Calu3 (cell line): ENCODE measurements at regions of chr9 and their contacts with region 1.

Region 1: DNA sequence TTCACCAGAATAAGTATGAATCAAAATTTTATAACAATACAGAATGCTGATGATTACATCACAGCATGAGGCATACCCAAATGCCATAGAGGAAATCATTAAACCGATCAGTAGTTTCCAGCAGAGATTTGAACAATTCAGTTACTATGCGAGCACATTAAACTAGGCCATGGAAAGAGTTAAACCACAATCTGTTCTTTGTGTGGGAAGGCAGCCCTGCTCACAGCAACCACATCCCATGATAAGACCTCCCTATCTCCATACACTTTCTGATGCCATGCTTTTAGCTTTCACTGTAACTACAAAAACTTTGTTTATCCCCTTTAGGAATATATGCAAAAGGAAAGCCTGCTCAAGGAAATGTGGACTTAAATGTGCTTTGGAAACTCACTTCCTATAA is 4.5 kb downstream of the NFIB start:
- DNase-seq: peak; percentile 41
- H3K4me3 Mint-ChIP-seq: peak overlapping the region; percentile 54
- H3K27ac Mint-ChIP-seq: peak overlapping the region; percentile 54
- H3K4me1 Mint-ChIP-seq: peaks cover 29% of the 10 kb centered on the region
- H3K27me3 Mint-ChIP-seq: no peaks in the 10 kb centered on the region
- CTCF ChIP-seq: no peak

Region 2: GRCh38 chr9:14089051-14089803 is 220.2 kb before region 1 on chr9:
- CTCF ChIA-PET with region 1: no interaction called
- intact Hi-C with region 1: no loop called
- DNase-seq: no peak
- H3K4me3 Mint-ChIP-seq: no peak overlapping the region
- H3K27ac Mint-ChIP-seq: no peak overlapping the region
- H3K4me1 Mint-ChIP-seq: no peaks in the 10 kb centered on the region
- H3K27me3 Mint-ChIP-seq: no peaks in the 10 kb centered on the region
- CTCF ChIP-seq: no peak

Region 3: DNA sequence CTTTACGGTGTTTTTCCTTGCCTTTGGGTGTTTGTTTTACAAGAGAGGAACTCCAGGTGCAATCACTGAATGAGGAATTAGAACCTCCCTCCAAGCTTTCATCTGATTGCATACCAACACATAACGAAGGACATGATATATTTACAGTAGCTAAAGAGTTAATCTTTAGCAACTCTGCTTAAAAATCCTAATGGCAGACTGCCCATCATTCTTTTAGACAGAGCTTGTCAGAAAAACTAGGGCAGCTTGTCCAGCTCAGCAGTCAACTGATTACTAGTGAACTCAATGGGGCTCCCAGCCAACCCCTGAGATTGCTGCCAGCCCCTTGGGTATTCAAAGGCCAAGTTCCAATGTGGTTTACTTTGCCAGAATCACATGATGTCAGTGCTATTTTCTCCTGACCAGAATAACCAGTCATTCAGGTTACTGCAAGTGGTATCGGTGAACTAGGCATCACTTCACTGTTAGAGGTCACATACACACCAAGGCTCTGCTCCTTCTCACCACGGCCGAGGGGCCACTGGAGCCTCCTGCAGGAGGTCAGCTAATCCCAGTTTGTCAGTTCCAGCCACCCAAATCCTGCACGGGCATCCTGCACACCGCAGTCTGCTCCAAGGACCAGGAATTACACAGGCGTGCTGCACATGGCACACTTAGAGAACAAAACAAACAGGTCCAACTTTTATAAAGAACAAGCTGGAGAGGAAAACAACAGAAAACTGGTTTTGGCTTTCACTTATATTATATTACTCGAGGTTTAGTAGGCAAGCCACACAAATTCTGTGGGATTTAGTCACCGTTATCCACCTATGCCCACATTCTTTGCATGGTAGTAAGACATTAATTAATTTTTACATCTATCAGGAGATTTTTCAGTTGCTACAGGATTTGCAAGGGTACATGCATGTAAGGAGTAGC is 58.0 kb before region 1 on chr9:
- CTCF ChIA-PET with region 1: no interaction called
- intact Hi-C with region 1: loop called (anchors 10 kb)
- DNase-seq: peak; percentile 76
- H3K4me3 Mint-ChIP-seq: peak overlapping the region; percentile 45
- H3K27ac Mint-ChIP-seq: peak overlapping the region; percentile 69
- H3K4me1 Mint-ChIP-seq: peaks cover 21% of the 10 kb centered on the region
- H3K27me3 Mint-ChIP-seq: no peaks in the 10 kb centered on the region
- CTCF ChIP-seq: no peak

Region 4: DNA sequence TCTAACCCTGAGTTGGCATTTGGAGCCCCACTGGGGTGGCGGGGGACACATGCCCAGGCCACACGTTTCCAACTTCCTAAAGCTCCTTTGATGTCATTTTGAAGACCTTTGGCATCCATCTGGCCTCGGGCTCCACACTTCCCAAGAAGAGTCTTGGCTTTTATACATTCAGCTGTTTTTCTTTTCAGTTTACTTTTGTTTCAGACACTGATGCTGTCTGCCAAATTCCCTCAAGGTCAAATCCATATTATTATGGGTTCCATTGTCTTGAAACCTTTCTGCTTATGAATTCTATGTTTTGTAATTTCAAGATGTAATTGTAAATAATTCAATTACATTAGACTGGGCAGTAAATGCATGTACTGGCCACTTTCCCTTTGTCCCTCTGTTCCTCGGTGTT is 28.2 kb after region 1 on chr9:
- CTCF ChIA-PET with region 1: no interaction called
- intact Hi-C with region 1: no loop called
- DNase-seq: no peak
- H3K4me3 Mint-ChIP-seq: no peak overlapping the region
- H3K27ac Mint-ChIP-seq: no peak overlapping the region
- H3K4me1 Mint-ChIP-seq: no peaks in the 10 kb centered on the region
- H3K27me3 Mint-ChIP-seq: no peaks in the 10 kb centered on the region
- CTCF ChIP-seq: no peak

Region 5: GRCh38 chr9:14478175-14479162 is 169.1 kb after region 1 on chr9:
- CTCF ChIA-PET with region 1: no interaction called
- intact Hi-C with region 1: no loop called
- DNase-seq: no peak
- H3K4me3 Mint-ChIP-seq: no peak overlapping the region
- H3K27ac Mint-ChIP-seq: no peak overlapping the region
- H3K4me1 Mint-ChIP-seq: peaks cover 10% of the 10 kb centered on the region
- H3K27me3 Mint-ChIP-seq: peaks cover 13% of the 10 kb centered on the region
- CTCF ChIP-seq: no peak